Esophagus muscularis mucosa (tissue), 4 donors: ENCODE measurements at regions of chr12 and their contacts with region 1.

Region 1: GRCh38 chr12:45990468-45991283 is at the start of gene SCAF11:
- DNase-seq: peak; percentile 100
- H3K4me3 ChIP-seq: peak within 1 kb of the TSS; percentile 76 to 90 (median 86)
- H3K27ac ChIP-seq: peak within 1 kb of the TSS; percentile 95 to 99 (median 97)
- H3K4me1 ChIP-seq: peaks cover 32 to 43% (median 38%) of the 10 kb centered on the region in 4 donors
- H3K27me3 ChIP-seq: no peaks in the 10 kb centered on the region
- CTCF ChIP-seq: peak in 2 of 3 experiments; percentile 98
- EP300 ChIP-seq: peak; percentile 28
- POLR2A ChIP-seq: peak; percentile 95
- total RNA-seq, gene SCAF11: 117 to 150 (median 132) TPM

Region 2: DNA sequence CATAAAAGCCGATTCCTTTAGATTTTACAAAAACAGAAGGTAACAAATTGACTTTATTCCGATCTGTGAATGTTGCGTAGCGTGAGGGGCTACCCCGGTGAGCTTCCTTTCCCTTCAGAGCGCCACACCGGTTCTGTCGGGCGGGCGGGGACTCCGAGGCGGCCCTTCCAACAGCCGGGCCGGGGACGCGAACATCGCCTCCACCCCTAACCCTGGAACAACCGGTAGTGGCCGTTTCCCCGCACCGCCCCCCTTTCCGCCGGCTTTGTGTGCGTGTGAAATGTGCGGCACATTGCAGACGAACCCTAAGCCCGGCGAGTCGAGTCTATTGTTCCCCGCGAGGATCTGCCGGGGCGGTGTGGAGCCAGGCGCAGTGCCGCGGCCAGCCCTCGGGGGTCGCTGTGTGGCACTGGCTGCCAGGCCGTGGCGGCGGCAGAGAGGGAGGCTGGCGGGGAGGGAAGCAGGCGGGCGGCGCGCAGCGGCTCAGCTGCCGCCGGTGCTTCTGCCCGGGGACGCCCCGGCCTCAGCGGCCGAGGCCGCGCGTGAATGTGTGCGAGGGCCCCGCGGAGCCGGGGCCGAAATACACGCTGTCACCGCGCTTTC is 261.9 kb before region 1 on chr12:
- intact Hi-C with region 1: loop called (anchors 1 kb)
- DNase-seq: peak; percentile 98
- H3K4me3 ChIP-seq: peak overlapping the region; percentile 83 to 88 (median 87)
- H3K27ac ChIP-seq: peak overlapping the region; percentile 98 to 100 (median 99)
- H3K4me1 ChIP-seq: peaks cover 38 to 47% (median 44%) of the 10 kb centered on the region in 4 donors
- H3K27me3 ChIP-seq: no peaks in the 10 kb centered on the region
- CTCF ChIP-seq: peak; percentile 91 to 100 (median 92)
- EP300 ChIP-seq: no peak
- POLR2A ChIP-seq: peak; percentile 81

Region 3: GRCh38 chr12:46372544-46373110 is 382.0 kb after region 1 on chr12 and contains the start of gene SLC38A2:
- intact Hi-C with region 1: loop called (anchors 10 kb)
- DNase-seq: peak; percentile 99
- H3K4me3 ChIP-seq: peak within 1 kb of the TSS; percentile 80 to 96 (median 88)
- H3K27ac ChIP-seq: peak within 1 kb of the TSS; percentile 95 to 99 (median 97)
- H3K4me1 ChIP-seq: peaks cover 33 to 41% (median 41%) of the 10 kb centered on the region in 4 donors
- H3K27me3 ChIP-seq: no peaks in the 10 kb centered on the region
- CTCF ChIP-seq: no peak
- EP300 ChIP-seq: no peak
- POLR2A ChIP-seq: peak; percentile 99
- total RNA-seq, gene SLC38A2: 177 to 241 (median 225) TPM